ENCODE measurements at regions of chr14 and their contacts with region 1.

Region 1: DNA sequence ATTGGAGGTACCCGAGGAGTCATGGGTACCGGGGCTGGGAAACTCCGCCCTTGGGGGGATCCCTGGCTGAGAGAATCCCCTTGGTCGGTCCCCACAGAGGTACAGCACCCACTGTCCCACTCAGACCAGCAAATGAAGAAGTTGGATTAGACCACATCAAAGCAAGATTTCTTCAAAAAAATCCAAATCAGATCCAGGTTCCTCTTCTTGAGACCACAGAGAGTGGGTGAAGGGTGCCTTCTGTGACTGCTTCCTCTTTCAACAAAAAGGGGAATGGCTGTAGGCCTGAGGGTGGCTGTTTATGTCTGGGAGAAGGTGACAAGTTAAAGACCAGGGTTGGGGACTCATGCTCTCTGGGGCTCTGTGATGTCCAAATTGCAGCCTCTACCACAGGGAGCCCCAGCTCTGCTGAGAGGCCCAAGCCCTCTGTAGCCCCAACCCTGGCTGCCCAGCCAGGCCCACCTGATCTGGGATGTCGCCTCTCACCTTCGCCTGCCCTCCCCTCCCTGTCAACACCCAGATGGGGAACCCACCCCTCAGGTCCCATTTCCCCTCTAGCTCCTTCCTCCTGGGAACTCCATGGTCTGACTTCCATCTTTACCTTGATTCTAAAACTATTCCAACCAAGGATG is 50.9 kb downstream of the ZFP36L1 start:
- DNase-seq: peak; percentile 95 to 99 (median 98)
- H3K4me3 ChIP-seq: peak overlapping the region in 1 of 3 experiments; percentile 12
- H3K4me3 Mint-ChIP-seq: peak overlapping the region in 1 of 2 donors; percentile 65
- H3K27ac ChIP-seq: peak overlapping the region; percentile 37 to 74
- H3K27ac Mint-ChIP-seq: peak overlapping the region; percentile 81 to 95 (median 91)
- H3K4me1 ChIP-seq: peaks cover 29% of the 10 kb centered on the region in 2 donors
- H3K4me1 Mint-ChIP-seq: peaks cover 38% of the 10 kb centered on the region
- H3K27me3 ChIP-seq: peaks cover 66 to 79% of the 10 kb centered on the region in 2 donors
- H3K27me3 Mint-ChIP-seq: peaks cover 79 to 84% (median 82%) of the 10 kb centered on the region in 3 donors
- CTCF ChIP-seq: no peak

Region 2: GRCh38 chr14:68703093-68703492 is 38.9 kb before region 1 on chr14:
- intact Hi-C with region 1: no loop called
- DNase-seq: peak; percentile 79 to 92 (median 87)
- H3K4me3 ChIP-seq: no peak overlapping the region
- H3K4me3 Mint-ChIP-seq: no peak overlapping the region
- H3K27ac ChIP-seq: peak overlapping the region in 1 of 2 donors; percentile 18
- H3K27ac Mint-ChIP-seq: peak overlapping the region; percentile 13 to 84 (median 69)
- H3K4me1 ChIP-seq: peaks cover 17 to 28% of the 10 kb centered on the region in 2 donors
- H3K4me1 Mint-ChIP-seq: peaks cover 28% of the 10 kb centered on the region
- H3K27me3 ChIP-seq: no peaks in the 10 kb centered on the region
- H3K27me3 Mint-ChIP-seq: peaks cover 6 to 10% (median 7%) of the 10 kb centered on the region in 3 donors
- CTCF ChIP-seq: no peak

Region 3: GRCh38 chr14:68757618-68758081 is 15.7 kb after region 1 on chr14:
- intact Hi-C with region 1: loop called in 1 of 2 experiments (anchors 2 kb)
- DNase-seq: peak; percentile 96 to 98 (median 97)
- H3K4me3 ChIP-seq: peak overlapping the region in 1 of 3 experiments; percentile 1
- H3K4me3 Mint-ChIP-seq: peak overlapping the region; percentile 34 to 65
- H3K27ac ChIP-seq: peak overlapping the region in 1 of 2 donors; percentile 44
- H3K27ac Mint-ChIP-seq: peak overlapping the region; percentile 67 to 89 (median 82)
- H3K4me1 ChIP-seq: peaks cover 31 to 34% of the 10 kb centered on the region in 2 donors
- H3K4me1 Mint-ChIP-seq: peaks cover 39% of the 10 kb centered on the region
- H3K27me3 ChIP-seq: peaks cover 25 to 54% of the 10 kb centered on the region in 2 donors
- H3K27me3 Mint-ChIP-seq: peaks cover 56 to 82% (median 70%) of the 10 kb centered on the region in 3 donors
- CTCF ChIP-seq: no peak

Region 4: GRCh38 chr14:68788996-68789820 is 47.3 kb after region 1 on chr14:
- intact Hi-C with region 1: loop called (anchors 2 to 5 kb)
- DNase-seq: peak; percentile 74 to 84 (median 84)
- H3K4me3 ChIP-seq: peak overlapping the region; percentile 54 to 97 (median 77)
- H3K4me3 Mint-ChIP-seq: peak overlapping the region; percentile 95 to 100
- H3K27ac ChIP-seq: peak overlapping the region; percentile 61 to 97
- H3K27ac Mint-ChIP-seq: peak overlapping the region; percentile 75 to 100 (median 90)
- H3K4me1 ChIP-seq: peaks cover 26 to 58% of the 10 kb centered on the region in 2 donors
- H3K4me1 Mint-ChIP-seq: peaks cover 53% of the 10 kb centered on the region
- H3K27me3 ChIP-seq: no peaks in the 10 kb centered on the region
- H3K27me3 Mint-ChIP-seq: peaks cover 4 to 13% (median 12%) of the 10 kb centered on the region in 3 donors
- CTCF ChIP-seq: peak; percentile 79